Caco-2 (cell line): ENCODE measurements at regions of chr14 and their contacts with region 1.

Region 1: DNA sequence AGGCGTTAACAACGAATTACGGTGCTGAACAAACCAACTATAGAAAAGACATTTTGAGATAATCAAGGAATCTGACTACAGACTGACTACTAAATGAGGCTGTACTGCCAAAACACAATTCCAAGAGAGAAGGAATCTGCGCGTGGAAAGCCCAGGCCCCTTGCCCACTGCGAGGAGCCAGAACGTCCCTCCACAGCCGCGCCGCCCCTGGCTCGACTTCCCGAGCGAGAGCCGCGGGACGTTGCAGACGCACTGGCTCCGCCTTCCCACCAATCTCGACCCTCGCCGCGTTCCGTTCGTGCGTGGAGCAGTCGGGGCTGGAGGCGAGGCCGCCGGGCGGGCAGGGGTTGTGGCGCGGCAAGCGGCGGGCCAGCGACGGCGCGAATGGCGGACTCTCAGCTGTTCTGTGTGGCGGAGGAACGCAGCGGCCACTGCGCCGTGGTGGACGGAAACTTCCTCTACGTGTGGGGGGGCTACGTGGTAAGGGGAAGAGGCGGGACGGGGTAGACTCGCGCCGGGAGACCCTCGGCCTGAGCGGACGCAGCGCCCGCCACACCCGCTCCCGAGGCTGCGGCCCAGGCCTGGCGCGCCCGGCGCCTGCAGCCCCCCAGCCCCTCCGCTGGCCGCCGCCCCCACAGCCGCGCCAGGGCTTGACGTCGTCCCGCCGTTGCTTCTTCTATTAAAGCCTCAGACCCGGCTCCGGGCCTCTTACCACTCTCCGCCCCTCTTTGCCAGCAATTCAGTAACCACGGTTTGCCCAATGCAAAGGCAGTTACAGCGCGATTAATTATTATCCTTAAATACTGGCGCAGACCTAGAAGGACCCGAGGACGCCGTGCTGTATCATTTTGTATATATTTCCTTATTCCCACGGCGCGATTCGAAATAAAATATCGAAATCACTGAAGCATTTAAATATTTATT is at the start of gene KLHDC1:
- DNase-seq: peak; percentile 78 to 80
- H3K4me3 ChIP-seq: peak within 1 kb of the TSS; percentile 87
- H3K4me3 Mint-ChIP-seq: peak within 1 kb of the TSS; percentile 75
- H3K27ac Mint-ChIP-seq: peak within 1 kb of the TSS; percentile 55
- H3K4me1 ChIP-seq: peaks cover 4% of the 10 kb centered on the region; the same call in 1 of the 2 replicates
- H3K4me1 Mint-ChIP-seq: peaks cover 23% of the 10 kb centered on the region
- H3K27me3 ChIP-seq: no peaks in the 10 kb centered on the region
- H3K27me3 Mint-ChIP-seq: no peaks in the 10 kb centered on the region
- CTCF ChIP-seq: no peak
- total RNA-seq, gene KLHDC1: 0.97 and 0.98 TPM in 2 replicates

Region 2: DNA sequence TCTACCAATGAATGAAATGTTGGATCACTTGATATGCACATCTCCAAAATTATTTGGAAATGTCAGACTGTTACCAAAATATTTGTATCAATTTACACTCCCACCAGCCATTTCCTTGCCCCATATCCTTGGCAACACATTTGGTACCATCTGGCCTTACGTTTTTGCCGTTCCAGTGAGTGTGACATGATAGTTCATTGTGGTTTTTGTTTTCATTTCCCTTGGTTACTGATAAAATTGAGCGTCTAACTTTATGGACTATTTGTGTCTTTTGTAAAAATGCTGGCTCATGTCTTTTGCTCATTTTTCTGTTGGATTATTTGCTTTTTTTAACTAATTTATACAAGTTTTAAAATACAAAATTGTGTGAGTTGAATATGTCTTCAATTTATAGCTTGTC is 10.9 kb after region 1 on chr14:
- CTCF ChIA-PET with region 1: no interaction called
- POLR2A ChIA-PET with region 1: interaction called, 11 read pairs
- intact Hi-C with region 1: no loop called
- DNase-seq: no peak
- H3K4me3 ChIP-seq: no peak overlapping the region
- H3K4me3 Mint-ChIP-seq: no peak overlapping the region
- H3K27ac Mint-ChIP-seq: no peak overlapping the region
- H3K4me1 ChIP-seq: no peaks in the 10 kb centered on the region
- H3K4me1 Mint-ChIP-seq: no peaks in the 10 kb centered on the region
- H3K27me3 ChIP-seq: no peaks in the 10 kb centered on the region
- H3K27me3 Mint-ChIP-seq: no peaks in the 10 kb centered on the region
- CTCF ChIP-seq: no peak

Region 3: GRCh38 chr14:49720744-49721143 is 27.7 kb after region 1 on chr14:
- CTCF ChIA-PET with region 1: interaction called, 11 read pairs
- POLR2A ChIA-PET with region 1: interaction called, 4 read pairs
- intact Hi-C with region 1: loop called (anchors 2 kb)
- DNase-seq: no peak
- H3K4me3 ChIP-seq: no peak overlapping the region
- H3K4me3 Mint-ChIP-seq: no peak overlapping the region
- H3K27ac Mint-ChIP-seq: no peak overlapping the region
- H3K4me1 ChIP-seq: no peaks in the 10 kb centered on the region
- H3K4me1 Mint-ChIP-seq: peaks cover 11% of the 10 kb centered on the region
- H3K27me3 ChIP-seq: no peaks in the 10 kb centered on the region
- H3K27me3 Mint-ChIP-seq: no peaks in the 10 kb centered on the region
- CTCF ChIP-seq: no peak

Region 4: GRCh38 chr14:49727171-49727570 is 34.1 kb after region 1 on chr14:
- CTCF ChIA-PET with region 1: interaction called, 11 read pairs
- POLR2A ChIA-PET with region 1: interaction called, 4 read pairs
- intact Hi-C with region 1: no loop called
- DNase-seq: no peak
- H3K4me3 ChIP-seq: no peak overlapping the region
- H3K4me3 Mint-ChIP-seq: no peak overlapping the region
- H3K27ac Mint-ChIP-seq: no peak overlapping the region
- H3K4me1 ChIP-seq: no peaks in the 10 kb centered on the region
- H3K4me1 Mint-ChIP-seq: peaks cover 3% of the 10 kb centered on the region
- H3K27me3 ChIP-seq: no peaks in the 10 kb centered on the region
- H3K27me3 Mint-ChIP-seq: no peaks in the 10 kb centered on the region
- CTCF ChIP-seq: no peak

Region 5: DNA sequence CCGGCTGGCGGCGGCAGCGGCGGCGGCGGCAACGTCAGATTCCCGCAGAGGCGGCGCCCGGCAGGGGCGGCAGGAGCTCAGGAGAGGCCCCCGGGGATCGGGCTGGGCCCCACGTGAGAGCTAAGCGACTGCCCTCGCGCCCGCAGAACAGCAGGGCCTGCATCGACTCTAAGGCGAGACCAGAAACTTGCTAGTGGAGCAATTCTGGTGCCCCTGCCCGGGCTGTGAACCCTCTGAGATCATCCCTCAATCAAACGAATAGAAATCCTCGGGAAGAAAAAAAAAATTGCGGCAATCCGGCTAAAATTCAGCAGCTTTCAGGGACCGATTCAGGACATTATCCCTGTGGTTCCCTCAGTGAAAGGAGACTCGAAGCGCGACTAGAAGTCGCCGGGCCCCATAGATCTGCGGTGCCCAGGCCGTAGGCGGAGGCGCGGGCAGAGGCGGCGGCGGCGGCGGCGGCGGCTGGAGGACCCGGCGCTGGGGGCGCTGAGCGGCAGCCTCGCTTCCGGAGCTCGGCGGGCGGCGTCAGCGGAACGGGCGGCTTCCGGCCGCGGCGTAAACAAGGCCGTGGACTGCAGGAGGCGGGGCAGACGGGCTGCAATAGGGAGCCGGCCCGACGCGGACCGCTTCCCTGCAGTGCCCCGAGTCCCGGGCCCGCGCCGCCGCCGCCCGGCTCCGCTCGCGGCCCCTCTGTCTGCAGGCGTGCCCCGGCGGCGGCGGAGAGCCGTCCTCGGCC is 74.7 kb after region 1 on chr14 and contains the start of gene KLHDC2:
- CTCF ChIA-PET with region 1: interaction called, 14 read pairs
- POLR2A ChIA-PET with region 1: interaction called, 15 read pairs
- intact Hi-C with region 1: loop called (anchors 1 kb)
- DNase-seq: peak; percentile 88 to 94
- H3K4me3 ChIP-seq: peak within 1 kb of the TSS; percentile 99
- H3K4me3 Mint-ChIP-seq: peak within 1 kb of the TSS; percentile 79
- H3K27ac Mint-ChIP-seq: peak within 1 kb of the TSS; percentile 79
- H3K4me1 ChIP-seq: peaks cover 35% of the 10 kb centered on the region
- H3K4me1 Mint-ChIP-seq: peaks cover 10% of the 10 kb centered on the region
- H3K27me3 ChIP-seq: no peaks in the 10 kb centered on the region
- H3K27me3 Mint-ChIP-seq: no peaks in the 10 kb centered on the region
- CTCF ChIP-seq: no peak
- total RNA-seq, gene KLHDC2: 76.5 and 89.4 TPM in 2 replicates

Region 6: GRCh38 chr14:49852301-49853157 is 159.5 kb after region 1 on chr14 and contains the start of gene NEMF:
- CTCF ChIA-PET with region 1: interaction called, 3 read pairs
- POLR2A ChIA-PET with region 1: no interaction called
- intact Hi-C with region 1: loop called (anchors 5 kb)
- DNase-seq: peak; percentile 86 to 92
- H3K4me3 ChIP-seq: peak within 1 kb of the TSS; percentile 84
- H3K4me3 Mint-ChIP-seq: peak within 1 kb of the TSS; percentile 100
- H3K27ac Mint-ChIP-seq: peak within 1 kb of the TSS; percentile 99
- H3K4me1 ChIP-seq: peaks cover 9% of the 10 kb centered on the region; the same call in 1 of the 2 replicates
- H3K4me1 Mint-ChIP-seq: peaks cover 6% of the 10 kb centered on the region
- H3K27me3 ChIP-seq: no peaks in the 10 kb centered on the region
- H3K27me3 Mint-ChIP-seq: no peaks in the 10 kb centered on the region
- CTCF ChIP-seq: peak; percentile 73 to 85
- total RNA-seq, gene NEMF: 57.4 and 62.7 TPM in 2 replicates